ENCODE measurements at regions of chr15 and their contacts with region 1.

Region 1: GRCh38 chr15:57561041-57561711 is 30.5 kb upstream of the MYZAP start:
- DNase-seq: peak; percentile 48
- ATAC-seq: peak; percentile 96
- H3K4me3 ChIP-seq: no peak overlapping the region
- H3K27ac ChIP-seq: no peak overlapping the region
- H3K4me1 ChIP-seq: no peaks in the 10 kb centered on the region
- H3K27me3 ChIP-seq: no peaks in the 10 kb centered on the region
- CTCF ChIP-seq: peak; percentile 94

Region 2: DNA sequence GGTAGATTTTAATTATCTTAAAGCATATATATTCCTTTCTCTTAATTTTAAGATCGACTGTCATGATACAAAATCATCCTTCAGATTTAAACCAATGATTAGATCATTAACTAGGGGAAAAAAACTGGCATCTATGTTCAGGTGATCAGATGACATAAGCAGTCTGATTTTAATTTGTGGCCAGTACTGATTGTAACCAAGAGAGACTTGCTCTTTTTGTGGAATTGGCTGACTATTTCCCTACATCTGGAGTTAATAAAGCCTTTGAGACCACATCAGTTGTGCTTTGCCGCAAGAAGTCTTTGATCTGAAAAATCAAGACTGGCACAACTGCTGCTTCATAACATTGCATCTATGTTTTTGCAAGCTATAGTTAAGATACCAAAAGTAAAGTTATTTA is 333.3 kb before region 1 on chr15:
- CTCF ChIA-PET with region 1: no interaction called
- POLR2A ChIA-PET with region 1: no interaction called
- in situ Hi-C with region 1: no loop called
- intact Hi-C with region 1: no loop called
- DNase-seq: no peak
- ATAC-seq: no peak
- H3K4me3 ChIP-seq: no peak overlapping the region
- H3K27ac ChIP-seq: no peak overlapping the region
- H3K4me1 ChIP-seq: no peaks in the 10 kb centered on the region; the same call in 1 of the 2 replicates
- H3K27me3 ChIP-seq: no peaks in the 10 kb centered on the region
- CTCF ChIP-seq: no peak

Region 3: DNA sequence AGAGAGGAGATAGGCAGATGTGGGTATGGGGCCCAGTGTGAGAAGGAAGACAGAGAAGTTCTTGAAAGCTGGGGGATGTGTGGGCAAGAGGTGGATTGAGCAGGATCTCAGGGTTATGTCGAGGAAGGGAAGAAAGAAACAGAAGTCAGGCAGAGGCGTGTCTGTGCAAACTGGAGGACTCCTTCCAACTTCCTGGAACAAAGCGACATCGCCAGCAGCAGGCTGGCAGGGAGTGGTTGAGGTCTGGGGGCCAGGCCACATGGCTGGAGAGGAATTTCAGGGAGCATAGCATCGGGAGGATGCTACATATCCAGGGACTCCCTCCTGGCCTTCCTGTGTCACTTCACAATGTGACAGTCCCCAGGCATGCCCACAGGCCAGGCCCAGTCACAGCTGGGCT is 12.3 kb before region 1 on chr15:
- CTCF ChIA-PET with region 1: interaction called, 10 read pairs
- POLR2A ChIA-PET with region 1: no interaction called
- in situ Hi-C with region 1: no loop called
- intact Hi-C with region 1: no loop called
- DNase-seq: no peak
- ATAC-seq: no peak
- H3K4me3 ChIP-seq: no peak overlapping the region
- H3K27ac ChIP-seq: no peak overlapping the region; the same call in 1 of the 2 replicates
- H3K4me1 ChIP-seq: peaks cover 13% of the 10 kb centered on the region
- H3K27me3 ChIP-seq: no peaks in the 10 kb centered on the region
- CTCF ChIP-seq: no peak

Region 4: GRCh38 chr15:57635300-57635909 is 74.2 kb after region 1 on chr15:
- CTCF ChIA-PET with region 1: no interaction called
- POLR2A ChIA-PET with region 1: no interaction called
- in situ Hi-C with region 1: no loop called
- intact Hi-C with region 1: no loop called
- DNase-seq: no peak
- ATAC-seq: no peak
- H3K4me3 ChIP-seq: no peak overlapping the region
- H3K27ac ChIP-seq: no peak overlapping the region
- H3K4me1 ChIP-seq: no peaks in the 10 kb centered on the region
- H3K27me3 ChIP-seq: no peaks in the 10 kb centered on the region; the same call in 1 of the 2 replicates
- CTCF ChIP-seq: no peak

Region 5: DNA sequence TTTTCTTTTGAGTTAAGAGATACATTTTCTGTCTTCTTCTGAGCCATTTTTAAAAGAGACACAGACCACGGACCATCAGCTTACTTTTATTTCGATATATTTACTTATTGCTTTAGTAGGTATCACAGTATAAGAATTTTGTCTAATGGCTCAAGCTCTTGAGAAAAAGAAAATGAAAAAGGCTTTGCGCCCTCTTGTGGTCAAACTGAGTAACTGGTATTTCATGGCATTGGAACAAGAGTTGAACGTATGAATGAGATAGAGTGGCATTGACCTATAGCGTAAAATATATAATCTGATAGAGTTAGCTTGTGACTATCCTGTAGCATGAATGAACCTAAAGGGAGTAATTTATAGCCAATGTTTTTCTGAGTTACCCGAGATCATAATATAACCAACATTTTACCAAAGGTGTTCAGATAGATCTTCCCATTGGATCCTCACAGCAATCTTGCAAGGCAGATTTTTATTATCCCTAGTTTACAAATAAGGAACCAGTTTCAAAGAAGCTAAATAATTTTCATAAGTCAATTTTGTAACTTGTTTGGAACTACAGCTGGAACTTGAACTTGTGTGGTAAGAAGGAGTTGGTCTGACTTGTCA is 300.0 kb after region 1 on chr15:
- CTCF ChIA-PET with region 1: no interaction called
- POLR2A ChIA-PET with region 1: no interaction called
- in situ Hi-C with region 1: no loop called
- intact Hi-C with region 1: loop called (anchors 5 kb)
- DNase-seq: peak; percentile 32
- ATAC-seq: peak; percentile 60; the same call in 1 of the 2 replicates
- H3K4me3 ChIP-seq: no peak overlapping the region
- H3K27ac ChIP-seq: no peak overlapping the region
- H3K4me1 ChIP-seq: no peaks in the 10 kb centered on the region
- H3K27me3 ChIP-seq: peaks cover 6% of the 10 kb centered on the region
- CTCF ChIP-seq: peak; percentile 73; the same call in 1 of the 2 replicates

Region 6: GRCh38 chr15:57922776-57923175 is 361.6 kb after region 1 on chr15:
- CTCF ChIA-PET with region 1: interaction called, 11 read pairs
- POLR2A ChIA-PET with region 1: no interaction called
- in situ Hi-C with region 1: no loop called
- intact Hi-C with region 1: no loop called
- DNase-seq: no peak
- ATAC-seq: no peak
- H3K4me3 ChIP-seq: no peak overlapping the region
- H3K27ac ChIP-seq: no peak overlapping the region
- H3K4me1 ChIP-seq: no peaks in the 10 kb centered on the region
- H3K27me3 ChIP-seq: no peaks in the 10 kb centered on the region
- CTCF ChIP-seq: no peak

Measured in Panc1 (cell line).